Activated B cell treated with CpG ODN at 0.5 μM for 24 hours (primary cell): ENCODE measurements at regions of chr2 and their contacts with region 1.

Region 1: GRCh38 chr2:206159346-206160124 is at the starts of genes EEF1B2 and NDUFS1:
- DNase-seq: peak; percentile 90
- ATAC-seq: peak; percentile 88
- H3K4me3 Mint-ChIP-seq: peak within 1 kb of the TSS; percentile 99
- H3K27ac Mint-ChIP-seq: peak within 1 kb of the TSS; percentile 97
- H3K4me1 Mint-ChIP-seq: peaks cover 56% of the 10 kb centered on the region
- H3K27me3 Mint-ChIP-seq: no peaks in the 10 kb centered on the region
- CTCF ChIP-seq: no peak
- total RNA-seq, gene EEF1B2: 1,278 and 1,486 TPM in 2 replicates
- total RNA-seq, gene NDUFS1: 47.3 and 50.1 TPM in 2 replicates

Region 2: GRCh38 chr2:205706769-205707381 is 452.7 kb before region 1 on chr2:
- CTCF ChIA-PET with region 1: no interaction called
- POLR2A ChIA-PET with region 1: interaction called, 8 read pairs
- intact Hi-C with region 1: loop called (anchors 10 kb)
- DNase-seq: peak; percentile 60
- ATAC-seq: peak; percentile 95
- H3K4me3 Mint-ChIP-seq: peak overlapping the region; percentile 65
- H3K27ac Mint-ChIP-seq: peak overlapping the region; percentile 99
- H3K4me1 Mint-ChIP-seq: peaks cover 63% of the 10 kb centered on the region
- H3K27me3 Mint-ChIP-seq: no peaks in the 10 kb centered on the region
- CTCF ChIP-seq: no peak

Region 3: DNA sequence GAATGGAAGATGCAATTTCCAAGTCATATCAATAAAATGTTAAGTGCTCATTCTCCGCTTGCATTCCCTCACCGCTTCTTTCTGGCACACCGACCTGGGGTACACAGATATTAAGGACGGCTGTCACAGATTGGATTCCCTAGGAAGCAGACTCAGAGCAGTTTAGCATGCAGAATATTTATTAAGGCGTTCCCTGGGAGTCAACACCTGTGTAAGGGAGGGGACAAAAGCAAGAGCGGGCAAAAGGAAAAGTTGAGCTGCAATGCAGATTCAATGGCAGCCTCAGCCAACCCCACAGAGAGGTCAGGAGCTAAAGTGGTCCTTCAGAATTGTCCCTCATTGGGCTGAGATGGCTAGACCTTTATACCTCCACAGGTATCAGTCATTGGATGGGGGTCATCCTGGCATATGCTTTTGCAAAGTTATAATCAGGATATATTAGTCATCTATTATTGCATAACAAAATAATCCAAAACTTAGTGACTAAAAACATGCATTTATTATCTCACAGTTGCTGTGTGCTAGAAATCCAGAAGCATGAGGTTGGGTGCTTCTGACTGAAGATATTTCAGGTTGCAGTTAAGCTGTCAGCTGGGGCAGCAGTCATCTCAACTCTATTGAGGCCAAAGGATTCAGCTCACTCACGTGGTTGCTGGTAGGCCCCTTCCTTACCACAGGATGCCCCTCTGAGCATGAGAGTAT is 46.5 kb before region 1 on chr2:
- CTCF ChIA-PET with region 1: no interaction called
- POLR2A ChIA-PET with region 1: no interaction called
- intact Hi-C with region 1: no loop called
- DNase-seq: no peak
- ATAC-seq: no peak
- H3K4me3 Mint-ChIP-seq: no peak overlapping the region
- H3K27ac Mint-ChIP-seq: no peak overlapping the region
- H3K4me1 Mint-ChIP-seq: no peaks in the 10 kb centered on the region
- H3K27me3 Mint-ChIP-seq: no peaks in the 10 kb centered on the region
- CTCF ChIP-seq: no peak

Region 4: DNA sequence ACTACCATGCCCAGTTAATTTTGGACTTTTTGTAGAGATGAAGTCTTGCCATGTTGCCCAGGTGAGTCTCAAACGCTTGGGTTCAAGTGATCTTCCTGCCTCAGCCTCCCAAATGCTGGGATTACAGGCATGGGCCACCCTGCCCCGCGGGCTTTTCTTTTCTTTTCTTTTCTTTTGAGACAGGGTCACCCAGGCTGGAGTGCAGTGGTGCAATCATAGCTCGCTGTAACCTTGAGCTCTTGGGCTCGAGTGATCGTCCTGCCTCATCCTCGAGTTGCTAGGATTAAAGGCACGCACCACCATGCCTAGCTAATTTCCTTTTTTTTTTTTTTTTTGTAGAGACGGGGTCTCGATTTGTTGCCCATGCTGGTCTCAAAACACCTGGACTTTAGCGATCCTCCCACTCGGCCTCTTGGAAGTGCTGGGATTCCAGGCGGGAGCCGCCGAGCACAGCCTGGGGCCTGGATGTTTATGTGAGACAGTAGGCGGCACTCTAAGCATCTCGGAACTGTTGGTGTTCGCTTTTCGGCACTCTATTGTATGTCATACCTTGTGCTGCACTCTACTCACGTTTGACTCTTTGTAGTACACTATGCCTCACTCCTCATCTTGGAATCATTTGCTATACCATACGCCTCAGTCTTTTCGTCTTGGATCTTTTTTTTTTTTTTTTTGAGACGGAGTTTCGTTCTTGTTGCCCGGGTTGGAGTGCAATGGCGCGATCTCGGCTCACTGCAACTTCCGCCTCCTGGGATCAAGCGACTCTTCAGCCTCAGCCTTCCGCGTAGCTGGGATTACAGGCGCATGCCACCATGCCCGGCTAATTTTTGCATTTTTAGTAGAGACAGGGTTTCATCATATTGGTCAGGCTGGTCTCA is 90.4 kb after region 1 on chr2:
- CTCF ChIA-PET with region 1: no interaction called
- POLR2A ChIA-PET with region 1: interaction called, 4 read pairs
- intact Hi-C with region 1: loop called (anchors 1 kb)
- DNase-seq: no peak
- ATAC-seq: no peak
- H3K4me3 Mint-ChIP-seq: peak overlapping the region; percentile 77
- H3K27ac Mint-ChIP-seq: no peak overlapping the region
- H3K4me1 Mint-ChIP-seq: peaks cover 29% of the 10 kb centered on the region
- H3K27me3 Mint-ChIP-seq: peaks cover 29% of the 10 kb centered on the region
- CTCF ChIP-seq: no peak

Region 5: DNA sequence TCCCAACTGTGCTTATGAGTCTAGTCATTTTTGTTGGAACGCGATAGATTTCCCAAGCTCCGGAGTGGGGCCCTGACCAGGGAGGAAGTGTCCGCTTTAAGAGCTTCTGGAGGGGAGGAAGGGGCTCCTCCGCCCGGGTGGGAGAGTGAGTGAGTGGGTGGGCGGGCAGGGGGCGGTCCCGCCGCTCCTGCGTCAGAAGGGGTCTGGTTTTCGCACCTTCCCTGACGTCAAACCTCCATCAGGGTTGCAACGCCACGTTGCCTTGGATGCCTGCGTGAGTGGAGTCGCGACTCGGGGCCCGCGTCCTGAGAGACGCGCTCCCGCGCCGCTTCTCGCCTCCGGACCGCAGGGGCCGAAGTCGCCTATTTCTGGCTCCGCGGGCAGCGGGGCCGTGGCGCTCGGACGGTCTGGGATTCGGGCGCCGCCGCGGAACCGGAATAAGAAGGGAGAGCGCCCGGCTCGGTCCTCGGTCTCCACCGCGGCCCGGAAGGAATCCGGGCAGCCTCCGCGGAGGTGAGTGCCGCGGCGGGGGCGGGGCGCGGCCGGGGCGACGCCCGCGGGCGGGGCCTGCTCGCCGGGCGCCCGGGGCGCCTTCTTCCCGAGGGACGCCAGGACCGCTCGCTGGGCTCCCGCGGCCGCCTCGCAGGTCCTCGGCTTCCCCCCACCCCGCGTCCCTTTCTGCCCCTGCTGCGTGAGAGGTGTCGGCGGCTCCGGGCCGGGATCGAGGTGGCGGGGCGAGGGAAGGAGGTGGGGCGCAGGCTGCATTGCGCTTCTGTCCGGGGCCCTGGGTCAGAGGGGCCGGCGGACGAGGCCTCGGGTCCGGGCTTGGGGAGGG is 115.1 kb after region 1 on chr2 and contains the start of gene ZDBF2:
- CTCF ChIA-PET with region 1: no interaction called
- POLR2A ChIA-PET with region 1: interaction called, 23 read pairs
- intact Hi-C with region 1: loop called (anchors 1 kb)
- DNase-seq: peak; percentile 58
- ATAC-seq: peak; percentile 86
- H3K4me3 Mint-ChIP-seq: peak within 1 kb of the TSS; percentile 84
- H3K27ac Mint-ChIP-seq: peak within 1 kb of the TSS; percentile 69
- H3K4me1 Mint-ChIP-seq: peaks cover 18% of the 10 kb centered on the region
- H3K27me3 Mint-ChIP-seq: peaks cover 43% of the 10 kb centered on the region
- CTCF ChIP-seq: no peak
- total RNA-seq, gene ZDBF2: 6.7 and 8.0 TPM in 2 replicates

Region 6: GRCh38 chr2:207710814-207711740 is 1551.5 kb after region 1 on chr2 and contains the start of gene CCNYL1:
- CTCF ChIA-PET with region 1: no interaction called
- POLR2A ChIA-PET with region 1: no interaction called
- intact Hi-C with region 1: loop called (anchors 5 kb)
- DNase-seq: peak; percentile 92
- ATAC-seq: peak; percentile 95
- H3K4me3 Mint-ChIP-seq: peak within 1 kb of the TSS; percentile 95
- H3K27ac Mint-ChIP-seq: peak within 1 kb of the TSS; percentile 85
- H3K4me1 Mint-ChIP-seq: peaks cover 23% of the 10 kb centered on the region
- H3K27me3 Mint-ChIP-seq: no peaks in the 10 kb centered on the region
- CTCF ChIP-seq: no peak
- total RNA-seq, gene CCNYL1: 12.2 and 13.5 TPM in 2 replicates